ENCODE measurements at regions of chr4 and their contacts with region 1.

Region 1: GRCh38 chr4:73653695-73654106 is 33.5 kb upstream of the RASSF6 start:
- DNase-seq: peak; percentile 69
- H3K4me3 Mint-ChIP-seq: no peak overlapping the region
- H3K27ac Mint-ChIP-seq: no peak overlapping the region
- H3K4me1 Mint-ChIP-seq: no peaks in the 10 kb centered on the region
- H3K27me3 Mint-ChIP-seq: peaks cover 12% of the 10 kb centered on the region

Region 2: GRCh38 chr4:73573794-73574406 is 79.8 kb before region 1 on chr4:
- intact Hi-C with region 1: loop called (anchors 5 kb)
- DNase-seq: peak; percentile 70
- H3K4me3 Mint-ChIP-seq: no peak overlapping the region
- H3K27ac Mint-ChIP-seq: no peak overlapping the region
- H3K4me1 Mint-ChIP-seq: no peaks in the 10 kb centered on the region
- H3K27me3 Mint-ChIP-seq: peaks cover 6% of the 10 kb centered on the region

Region 3: DNA sequence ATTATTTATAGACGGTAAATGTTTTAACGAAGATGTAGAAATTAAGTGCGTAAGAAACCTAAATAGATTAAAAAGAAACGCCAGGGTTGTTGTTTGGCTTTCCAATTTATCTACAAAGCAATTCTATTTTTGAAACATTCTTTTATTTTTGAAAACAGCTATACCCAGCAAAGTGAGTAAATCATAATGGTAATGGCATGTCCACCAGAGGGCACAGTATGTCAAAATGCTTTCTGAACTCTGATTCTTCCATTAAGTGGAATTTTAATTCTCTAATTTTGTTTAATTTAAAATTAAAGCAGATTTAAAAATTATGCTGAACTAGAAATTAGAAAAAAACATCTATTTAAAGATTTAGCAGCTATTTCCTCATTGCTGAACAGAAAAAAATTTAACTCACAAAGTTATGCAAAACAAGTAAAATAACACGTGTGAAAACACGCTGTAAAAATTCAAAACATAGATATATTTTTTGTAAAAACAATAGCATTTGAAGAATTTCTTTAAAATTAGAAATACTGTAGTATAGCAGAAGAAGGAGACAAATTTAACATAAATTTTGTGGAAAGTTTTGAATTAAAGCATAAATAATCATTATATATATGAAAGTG is 60.0 kb before region 1 on chr4:
- intact Hi-C with region 1: loop called (anchors 5 kb)
- DNase-seq: no peak
- H3K4me3 Mint-ChIP-seq: no peak overlapping the region
- H3K27ac Mint-ChIP-seq: no peak overlapping the region
- H3K4me1 Mint-ChIP-seq: no peaks in the 10 kb centered on the region
- H3K27me3 Mint-ChIP-seq: peaks cover 2% of the 10 kb centered on the region